Posterior vena cava (tissue), 2 donors: ENCODE measurements at regions of chr6 and their contacts with region 1.

Region 1: DNA sequence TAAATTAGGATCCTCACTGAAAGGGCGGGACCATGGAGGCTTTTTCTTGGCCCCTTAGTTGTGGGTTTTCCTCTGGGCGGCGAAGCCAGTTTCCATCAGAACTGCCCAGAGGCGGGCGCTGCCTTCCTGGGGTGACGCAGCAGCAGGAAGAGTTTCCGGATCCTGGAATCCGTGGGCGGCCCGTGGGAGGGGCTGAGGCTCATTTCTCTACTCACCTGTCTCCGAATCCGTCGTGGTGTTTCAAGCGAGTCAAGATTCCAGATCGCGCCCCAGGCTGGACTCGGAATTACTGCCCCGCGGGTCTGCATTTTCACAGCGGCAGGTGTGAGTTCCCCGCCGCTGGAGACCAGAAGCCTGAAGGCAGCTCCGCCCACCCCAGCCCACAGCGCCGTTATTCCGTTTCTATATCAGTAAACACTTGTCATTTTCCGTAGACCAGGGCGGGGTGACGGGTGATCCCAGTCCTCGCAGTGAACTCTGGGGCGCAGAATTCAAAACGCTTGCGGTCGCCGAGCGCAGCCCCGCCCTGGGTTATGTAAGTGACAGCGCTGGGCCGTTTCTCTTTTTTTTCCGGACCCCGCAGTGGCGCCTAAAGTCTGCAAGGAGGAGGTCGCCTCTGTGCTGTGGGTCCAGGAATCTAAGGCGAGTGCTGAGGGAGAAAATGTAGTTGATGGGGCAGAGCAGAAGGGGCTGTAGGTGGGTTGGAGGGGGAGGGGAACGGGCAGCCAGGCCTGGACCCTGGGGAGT is 27.2 kb upstream of the POU5F1 start:
- DNase-seq: peak; percentile 98

Region 2: DNA sequence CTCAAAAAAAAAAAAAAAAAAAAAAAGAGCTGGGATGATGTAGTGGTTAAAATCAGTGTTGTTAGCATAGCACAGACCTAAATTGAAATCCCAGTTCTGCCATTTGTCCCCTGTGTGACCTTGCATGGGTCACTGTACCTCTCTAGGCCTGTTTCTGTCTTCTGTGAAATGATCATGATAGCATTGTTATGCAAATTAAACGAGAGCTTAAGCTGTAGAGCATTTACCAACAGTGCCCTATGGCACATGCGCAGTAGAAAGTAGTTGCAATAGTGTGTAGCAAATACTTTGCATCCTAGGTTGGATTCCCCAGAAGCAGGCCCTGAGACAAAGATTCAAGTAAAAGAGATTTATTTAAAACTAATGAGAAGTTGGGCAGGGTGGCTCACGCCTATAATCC is 66.1 kb before region 1 on chr6:
- intact Hi-C with region 1: loop called (anchors 5 kb)
- DNase-seq: no peak

Region 3: DNA sequence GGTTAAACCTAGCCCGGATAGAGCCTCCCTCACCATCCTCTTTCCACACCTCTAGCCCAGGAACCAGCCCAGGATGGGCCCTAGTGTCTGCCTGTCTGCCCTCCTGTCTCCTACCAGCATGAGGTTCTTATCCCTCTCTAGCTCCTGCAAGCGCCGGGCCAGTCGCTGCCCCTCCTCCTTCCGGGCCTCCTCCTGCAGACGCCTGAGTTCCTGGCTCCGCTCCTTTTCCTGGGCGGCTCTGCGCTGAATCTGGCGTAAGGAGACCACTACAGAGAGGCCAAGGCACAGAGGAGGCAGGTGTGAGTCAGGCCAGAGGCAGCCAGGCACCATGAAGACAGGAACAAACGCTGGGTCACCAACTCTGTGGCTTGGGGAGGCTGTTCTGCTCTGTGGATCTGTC is 54.6 kb before region 1 on chr6:
- intact Hi-C with region 1: loop called in 1 of 2 experiments (anchors 5 kb)
- DNase-seq: peak; percentile 89

Region 4: DNA sequence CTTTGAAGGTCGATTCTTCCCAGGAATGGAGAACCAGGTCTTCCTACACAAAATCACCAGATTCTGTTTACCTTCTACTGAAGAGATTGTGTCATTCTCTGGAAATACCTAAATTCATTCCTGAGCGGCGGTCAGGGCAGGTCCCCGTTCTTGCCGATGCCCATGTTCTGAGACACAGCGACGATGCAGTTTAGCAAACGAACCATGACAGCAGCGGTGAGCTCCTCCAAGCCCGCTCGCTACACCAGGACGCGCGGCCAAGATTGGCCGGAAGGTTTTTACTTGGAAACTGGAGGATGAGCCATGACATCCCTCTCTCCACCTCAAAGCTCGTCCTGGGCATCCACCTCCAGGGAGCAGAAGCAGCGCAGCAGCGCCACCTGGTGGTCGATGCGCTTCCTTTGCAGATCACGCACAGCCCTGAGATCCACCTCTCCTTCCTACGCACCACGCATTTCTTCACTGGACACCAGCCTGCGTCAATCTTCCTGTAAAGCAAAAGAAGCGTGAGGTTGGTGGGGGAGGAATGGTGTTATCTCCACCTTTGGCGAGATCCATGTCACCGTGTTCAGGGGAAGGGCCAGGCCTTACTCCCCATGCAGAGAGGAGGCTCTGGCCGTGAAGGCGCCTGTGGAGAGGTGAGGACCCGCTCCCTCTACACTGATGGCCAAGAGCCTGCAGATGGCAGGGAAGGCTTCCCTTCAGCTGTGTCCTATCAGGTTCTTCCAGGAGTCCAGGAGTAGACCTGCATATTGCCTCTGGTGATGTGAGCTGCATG is 169.2 kb after region 1 on chr6:
- intact Hi-C with region 1: loop called (anchors 5 to 10 kb)
- DNase-seq: peak; percentile 98